Activated T-helper 2 cell treated with anti-CD3 and anti-CD28 coated beads, Interferon-gamma antibody, Interleukin-2, Interleukin-4, amounts not matched to agents 10 μg/mL and 5 μg/mL and 100 μg/mL, durations not matched to agents 14 hours and 24 hours and 36 hours (primary cell): ENCODE measurements at regions of chr1 and their contacts with region 1.

Region 1: GRCh38 chr1:42958488-42959319 is at the start of gene SLC2A1:
- DNase-seq: peak; percentile 91
- H3K4me3 Mint-ChIP-seq: peak within 1 kb of the TSS; percentile 97
- H3K27ac Mint-ChIP-seq: peak within 1 kb of the TSS; percentile 100
- H3K4me1 Mint-ChIP-seq: peaks cover 52% of the 10 kb centered on the region
- H3K27me3 Mint-ChIP-seq: peaks cover 2% of the 10 kb centered on the region
- total RNA-seq, gene SLC2A1: 143 and 155 TPM in 2 replicates

Region 2: GRCh38 chr1:42816585-42817434 is 141.9 kb before region 1 on chr1 and contains the starts of genes ERMAP and SVBP:
- intact Hi-C with region 1: loop called (anchors 2 kb)
- DNase-seq: peak; percentile 89
- H3K4me3 Mint-ChIP-seq: peak within 1 kb of the TSS; percentile 85
- H3K27ac Mint-ChIP-seq: peak within 1 kb of the TSS; percentile 84
- H3K4me1 Mint-ChIP-seq: peaks cover 22% of the 10 kb centered on the region
- H3K27me3 Mint-ChIP-seq: no peaks in the 10 kb centered on the region
- total RNA-seq, gene ERMAP: 3.1 and 4.8 TPM in 2 replicates
- total RNA-seq, gene SVBP: 11.4 and 12.3 TPM in 2 replicates

Region 3: GRCh38 chr1:42924082-42924850 is 34.4 kb before region 1 on chr1:
- intact Hi-C with region 1: loop called (anchors 1 kb)
- DNase-seq: peak; percentile 89
- H3K4me3 Mint-ChIP-seq: peak overlapping the region; percentile 80
- H3K27ac Mint-ChIP-seq: peak overlapping the region; percentile 93
- H3K4me1 Mint-ChIP-seq: peaks cover 35% of the 10 kb centered on the region
- H3K27me3 Mint-ChIP-seq: no peaks in the 10 kb centered on the region

Region 4: DNA sequence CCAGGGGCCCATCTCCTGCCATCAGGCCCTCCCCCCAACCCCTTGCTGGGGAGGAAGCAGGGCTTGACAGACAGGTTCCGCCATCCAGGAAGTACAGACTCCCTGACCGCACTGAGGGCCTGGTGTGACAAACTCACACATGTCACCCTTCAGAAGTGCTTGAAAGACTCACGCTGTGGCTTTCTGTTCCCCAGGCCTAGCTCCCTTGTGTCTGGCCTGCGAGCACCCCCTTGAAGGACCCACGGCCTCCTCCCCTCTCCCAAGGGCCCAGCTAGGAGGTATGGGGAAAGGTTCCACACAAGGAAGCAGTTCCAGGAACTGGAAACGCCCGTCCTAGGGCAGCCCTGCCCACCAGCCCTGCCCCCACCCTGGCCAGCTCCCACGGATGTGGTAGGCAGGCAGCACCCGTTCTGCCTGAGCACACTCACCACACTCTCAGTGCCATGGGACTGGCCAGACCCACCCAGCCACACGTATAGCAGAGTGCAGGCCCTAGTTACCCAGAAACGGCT is 26.7 kb before region 1 on chr1:
- intact Hi-C with region 1: loop called (anchors 1 kb)
- DNase-seq: peak; percentile 79
- H3K4me3 Mint-ChIP-seq: peak overlapping the region; percentile 54
- H3K27ac Mint-ChIP-seq: peak overlapping the region; percentile 91
- H3K4me1 Mint-ChIP-seq: peaks cover 68% of the 10 kb centered on the region
- H3K27me3 Mint-ChIP-seq: no peaks in the 10 kb centered on the region

Region 5: DNA sequence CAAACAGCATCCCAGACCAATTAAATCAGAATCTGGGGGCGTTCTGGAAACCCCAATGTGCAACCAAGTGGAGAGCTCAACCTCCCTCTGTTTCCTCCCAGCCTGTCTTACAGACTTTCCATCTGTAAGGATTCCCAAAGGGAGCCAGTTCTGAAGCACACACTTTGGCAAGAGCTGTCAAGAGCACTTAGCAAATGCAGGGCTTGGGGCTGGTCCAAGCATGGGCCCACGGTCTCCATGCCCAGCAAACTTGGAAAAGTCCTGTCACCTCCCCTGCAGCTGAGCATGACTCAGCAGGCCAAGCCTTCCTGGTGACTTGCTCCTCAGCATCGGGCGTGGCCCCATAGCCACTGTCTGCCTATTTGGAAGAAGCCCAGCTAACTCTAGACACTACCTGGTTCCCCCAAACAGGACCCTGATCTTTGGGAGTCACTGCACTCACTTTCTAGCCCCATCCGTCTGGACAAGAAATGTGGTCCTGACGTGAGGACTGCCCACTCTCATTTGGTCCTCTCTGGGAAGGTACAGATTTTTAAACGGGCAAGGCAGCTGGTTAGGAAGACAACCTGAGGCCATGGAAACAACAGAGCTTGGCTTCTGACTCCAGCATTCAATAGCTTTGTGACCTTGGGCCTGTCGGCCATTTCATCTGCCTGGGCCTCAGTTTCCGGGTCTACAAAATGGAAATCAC is 16.9 kb before region 1 on chr1:
- intact Hi-C with region 1: loop called (anchors 1 kb)
- DNase-seq: no peak
- H3K4me3 Mint-ChIP-seq: peak overlapping the region; percentile 37
- H3K27ac Mint-ChIP-seq: peak overlapping the region; percentile 93
- H3K4me1 Mint-ChIP-seq: peaks cover 90% of the 10 kb centered on the region
- H3K27me3 Mint-ChIP-seq: no peaks in the 10 kb centered on the region

Region 6: GRCh38 chr1:43073490-43074230 is 115.0 kb after region 1 on chr1:
- intact Hi-C with region 1: no loop called
- DNase-seq: peak; percentile 55
- H3K4me3 Mint-ChIP-seq: no peak overlapping the region
- H3K27ac Mint-ChIP-seq: no peak overlapping the region
- H3K4me1 Mint-ChIP-seq: peaks cover 4% of the 10 kb centered on the region
- H3K27me3 Mint-ChIP-seq: peaks cover 2% of the 10 kb centered on the region